CD4-positive, alpha-beta memory T cell (primary cell): ENCODE measurements at regions of chrX and their contacts with region 1.

Region 1: GRCh38 chrX:150715184-150715583 is 22.0 kb downstream of the MTMR1 start:
- DNase-seq: no peak
- H3K4me3 ChIP-seq: no peak overlapping the region
- H3K4me3 Mint-ChIP-seq: peak overlapping the region in 1 of 8 donors; percentile 30
- H3K27ac ChIP-seq: no peak overlapping the region
- H3K27ac Mint-ChIP-seq: peak overlapping the region in 6 of 7 donors; percentile 32 to 85 (median 63)
- H3K4me1 ChIP-seq: peaks cover 20% of the 10 kb centered on the region
- H3K4me1 Mint-ChIP-seq: peaks cover 9 to 48% (median 34%) of the 10 kb centered on the region in 4 donors
- H3K27me3 ChIP-seq: no peaks in the 10 kb centered on the region
- H3K27me3 Mint-ChIP-seq: no peaks in the 10 kb centered on the region

Region 2: GRCh38 chrX:149962859-149963757 is 752.1 kb before region 1 on chrX:
- CTCF ChIA-PET with region 1: no interaction called
- POLR2A ChIA-PET with region 1: no interaction called
- intact Hi-C with region 1: loop called (anchors 2 kb)
- DNase-seq: peak in 4 of 5 donors; percentile 2 to 21 (median 12)
- H3K4me3 ChIP-seq: no peak overlapping the region
- H3K4me3 Mint-ChIP-seq: no peak overlapping the region
- H3K27ac ChIP-seq: no peak overlapping the region
- H3K27ac Mint-ChIP-seq: peak overlapping the region in 2 of 7 donors; percentile 25 to 74
- H3K4me1 ChIP-seq: no peaks in the 10 kb centered on the region
- H3K4me1 Mint-ChIP-seq: no peaks in the 10 kb centered on the region
- H3K27me3 ChIP-seq: no peaks in the 10 kb centered on the region
- H3K27me3 Mint-ChIP-seq: no peaks in the 10 kb centered on the region

Region 3: GRCh38 chrX:150676221-150676620 is 39.0 kb before region 1 on chrX:
- CTCF ChIA-PET with region 1: interaction called, 128 read pairs
- POLR2A ChIA-PET with region 1: interaction called, 3 read pairs
- intact Hi-C with region 1: no loop called
- DNase-seq: no peak
- H3K4me3 ChIP-seq: no peak overlapping the region
- H3K4me3 Mint-ChIP-seq: no peak overlapping the region
- H3K27ac ChIP-seq: no peak overlapping the region
- H3K27ac Mint-ChIP-seq: no peak overlapping the region
- H3K4me1 ChIP-seq: no peaks in the 10 kb centered on the region
- H3K4me1 Mint-ChIP-seq: no peaks in the 10 kb centered on the region
- H3K27me3 ChIP-seq: no peaks in the 10 kb centered on the region
- H3K27me3 Mint-ChIP-seq: no peaks in the 10 kb centered on the region

Region 4: GRCh38 chrX:150683536-150684146 is 31.5 kb before region 1 on chrX:
- CTCF ChIA-PET with region 1: interaction called, 128 read pairs
- POLR2A ChIA-PET with region 1: interaction called, 6 read pairs
- intact Hi-C with region 1: loop called (anchors 1 kb)
- DNase-seq: peak in 4 of 5 donors; percentile 59 to 67 (median 62)
- H3K4me3 ChIP-seq: no peak overlapping the region
- H3K4me3 Mint-ChIP-seq: no peak overlapping the region
- H3K27ac ChIP-seq: no peak overlapping the region
- H3K27ac Mint-ChIP-seq: peak overlapping the region in 3 of 7 donors; percentile 17 to 40 (median 17)
- H3K4me1 ChIP-seq: peaks cover 16% of the 10 kb centered on the region
- H3K4me1 Mint-ChIP-seq: peaks cover 10 to 12% (median 10%) of the 10 kb centered on the region in 4 donors
- H3K27me3 ChIP-seq: no peaks in the 10 kb centered on the region
- H3K27me3 Mint-ChIP-seq: no peaks in the 10 kb centered on the region